Caco-2 (cell line): ENCODE measurements at regions of chr7 and their contacts with region 1.

Region 1: GRCh38 chr7:101077303-101078089 is 7.8 kb upstream of the TRIM56 start:
- DNase-seq: peak; percentile 87 to 91
- H3K4me3 ChIP-seq: no peak overlapping the region
- H3K4me3 Mint-ChIP-seq: no peak overlapping the region
- H3K27ac Mint-ChIP-seq: no peak overlapping the region
- H3K4me1 ChIP-seq: no peaks in the 10 kb centered on the region
- H3K4me1 Mint-ChIP-seq: peaks cover 5% of the 10 kb centered on the region
- H3K27me3 ChIP-seq: no peaks in the 10 kb centered on the region
- H3K27me3 Mint-ChIP-seq: peaks cover 10% of the 10 kb centered on the region
- CTCF ChIP-seq: peak; percentile 69 to 96

Region 2: DNA sequence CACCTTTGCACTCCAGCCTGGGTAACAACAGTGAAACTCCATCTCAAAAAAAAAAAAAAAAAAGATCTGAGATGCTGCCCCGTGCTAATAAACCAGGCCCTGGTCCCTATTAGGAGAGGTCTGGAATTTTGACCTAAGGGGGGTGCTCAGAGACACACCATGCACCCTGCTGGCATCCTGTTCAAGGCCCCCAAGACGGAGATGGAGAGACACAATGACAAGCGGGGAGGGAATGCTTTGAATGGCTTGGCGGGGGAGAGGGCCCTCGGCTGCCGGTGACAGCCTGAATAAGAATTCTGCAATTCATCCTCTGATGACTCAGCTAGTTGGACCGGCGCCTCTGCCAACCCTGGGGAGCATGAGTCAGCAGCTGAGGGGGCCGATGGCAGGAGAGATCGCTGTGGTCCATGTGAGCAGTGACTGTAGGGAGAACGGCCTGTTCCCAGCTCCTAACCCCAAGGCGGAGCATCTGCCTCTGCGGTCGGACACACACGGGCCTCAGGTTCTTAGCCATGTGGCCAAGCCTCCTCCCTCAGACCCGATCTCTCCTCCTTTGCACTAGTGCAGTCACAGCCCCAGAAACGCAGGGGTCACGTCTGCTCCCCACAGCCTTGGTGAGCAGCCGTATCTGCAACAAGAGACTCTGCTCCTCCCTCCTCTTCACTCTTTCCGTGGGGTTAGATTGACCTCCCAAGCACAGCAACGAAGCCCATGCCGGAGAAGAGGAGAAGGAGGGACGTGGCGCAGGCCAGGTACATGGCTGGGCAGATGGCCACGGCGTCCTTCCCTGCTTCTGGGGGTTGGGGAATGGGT is 22.7 kb after region 1 on chr7:
- CTCF ChIA-PET with region 1: interaction called, 11 read pairs
- POLR2A ChIA-PET with region 1: no interaction called
- intact Hi-C with region 1: no loop called
- DNase-seq: peak; percentile 70 to 85
- H3K4me3 ChIP-seq: no peak overlapping the region
- H3K4me3 Mint-ChIP-seq: no peak overlapping the region
- H3K27ac Mint-ChIP-seq: peak overlapping the region; percentile 75
- H3K4me1 ChIP-seq: peaks cover 27% of the 10 kb centered on the region
- H3K4me1 Mint-ChIP-seq: peaks cover 22% of the 10 kb centered on the region
- H3K27me3 ChIP-seq: no peaks in the 10 kb centered on the region
- H3K27me3 Mint-ChIP-seq: no peaks in the 10 kb centered on the region
- CTCF ChIP-seq: no peak

Region 3: DNA sequence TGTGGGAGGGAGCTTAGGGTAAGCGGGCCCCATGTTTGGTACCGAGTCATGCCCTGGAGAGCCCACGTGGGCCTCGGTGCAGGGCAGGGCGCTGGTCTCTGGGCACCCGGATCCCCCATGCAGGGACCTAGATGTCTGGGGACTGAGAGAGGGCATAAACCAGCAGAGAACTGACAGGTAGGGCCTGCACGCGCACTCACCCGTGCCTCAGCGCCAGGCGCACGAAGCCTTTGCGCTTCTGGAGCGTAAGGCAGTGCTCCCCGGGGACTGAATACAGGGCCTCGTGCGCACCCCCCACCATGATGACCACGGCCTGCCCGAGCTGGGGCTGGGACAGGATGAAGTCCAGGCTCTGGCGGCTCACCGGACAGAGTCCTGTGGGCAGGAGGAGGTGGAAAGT is 120.5 kb after region 1 on chr7:
- CTCF ChIA-PET with region 1: no interaction called
- POLR2A ChIA-PET with region 1: no interaction called
- intact Hi-C with region 1: no loop called
- DNase-seq: no peak
- H3K4me3 ChIP-seq: no peak overlapping the region
- H3K4me3 Mint-ChIP-seq: no peak overlapping the region
- H3K27ac Mint-ChIP-seq: no peak overlapping the region
- H3K4me1 ChIP-seq: peaks cover 20% of the 10 kb centered on the region
- H3K4me1 Mint-ChIP-seq: peaks cover 14% of the 10 kb centered on the region
- H3K27me3 ChIP-seq: no peaks in the 10 kb centered on the region
- H3K27me3 Mint-ChIP-seq: no peaks in the 10 kb centered on the region
- CTCF ChIP-seq: no peak

Region 4: DNA sequence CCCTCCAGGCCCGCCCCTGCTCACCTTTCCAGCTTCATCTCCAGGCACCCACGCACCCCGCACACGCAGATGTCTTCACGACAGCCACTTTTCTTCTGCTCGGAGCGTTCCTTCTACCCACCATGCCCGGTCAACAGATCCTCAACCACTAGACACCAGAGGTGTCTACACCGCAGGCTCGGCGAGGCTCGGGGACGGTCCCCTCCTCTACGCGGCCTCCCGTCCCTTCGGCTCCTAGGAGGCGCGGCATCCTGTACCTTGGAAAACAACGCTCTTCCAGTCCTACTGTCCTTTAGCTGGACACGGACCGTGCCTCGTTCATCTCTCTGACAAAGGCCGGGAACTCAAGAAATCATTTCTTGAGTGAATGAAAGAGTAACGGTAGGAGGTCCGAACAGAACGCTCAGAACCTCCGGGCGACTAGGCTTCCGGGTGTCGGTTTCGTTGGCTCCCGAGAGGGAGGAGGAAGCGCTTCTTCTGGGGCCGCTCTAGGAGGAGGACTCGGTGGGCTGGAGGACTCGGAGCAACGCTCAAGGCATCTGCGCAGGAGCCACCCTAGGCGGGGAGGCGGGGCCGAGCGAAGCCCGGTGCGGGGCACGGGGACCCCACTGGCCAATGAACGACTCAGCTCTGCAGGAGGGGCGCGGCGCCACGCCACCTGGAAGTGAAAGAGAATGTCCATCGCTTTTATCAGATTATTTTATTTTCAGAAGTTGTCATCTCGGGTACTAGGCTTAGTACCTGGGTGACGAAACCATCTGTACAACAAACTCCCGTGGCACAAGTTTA is 174.6 kb after region 1 on chr7:
- CTCF ChIA-PET with region 1: no interaction called
- POLR2A ChIA-PET with region 1: no interaction called
- intact Hi-C with region 1: no loop called
- DNase-seq: peak; percentile 99 to 100
- H3K4me3 ChIP-seq: peak overlapping the region; percentile 80
- H3K4me3 Mint-ChIP-seq: peak overlapping the region; percentile 88
- H3K27ac Mint-ChIP-seq: peak overlapping the region; percentile 92
- H3K4me1 ChIP-seq: no peaks in the 10 kb centered on the region
- H3K4me1 Mint-ChIP-seq: peaks cover 6% of the 10 kb centered on the region
- H3K27me3 ChIP-seq: no peaks in the 10 kb centered on the region
- H3K27me3 Mint-ChIP-seq: no peaks in the 10 kb centered on the region
- CTCF ChIP-seq: no peak